IMR-90 (cell line): ENCODE measurements at regions of chr5 and their contacts with region 1.

Region 1: DNA sequence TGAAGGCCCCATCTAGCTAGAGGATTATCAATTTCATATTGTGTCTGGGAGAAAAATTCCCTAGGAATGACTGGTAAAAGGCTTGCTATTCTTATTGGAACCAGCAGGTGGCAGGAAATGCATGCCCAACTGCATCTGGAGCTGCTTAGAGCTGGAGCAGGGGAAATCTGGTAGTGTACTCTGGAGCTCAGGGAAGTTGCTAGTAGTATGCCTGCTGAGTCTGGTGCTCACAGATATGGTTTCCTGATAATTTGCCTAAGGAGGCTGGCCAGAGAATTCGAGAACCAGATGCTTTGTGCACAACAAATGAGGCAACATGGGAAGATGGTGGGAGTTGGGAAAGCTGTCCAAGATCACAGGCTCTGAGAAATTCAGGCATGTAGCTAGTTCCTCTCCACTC is 53.7 kb downstream of the G3BP1 start:
- DNase-seq: peak; percentile 69
- ATAC-seq: peak; percentile 98
- H3K4me3 ChIP-seq: no peak overlapping the region
- H3K27ac ChIP-seq: no peak overlapping the region
- H3K4me1 ChIP-seq: no peaks in the 10 kb centered on the region
- H3K27me3 ChIP-seq: no peaks in the 10 kb centered on the region
- CTCF ChIP-seq: peak; percentile 89
- POLR2A ChIP-seq: no peak
- RAD21 ChIP-seq: peak; percentile 86

Region 2: GRCh38 chr5:151745071-151745705 is 80.3 kb before region 1 on chr5:
- CTCF ChIA-PET with region 1: no interaction called
- POLR2A ChIA-PET with region 1: no interaction called
- dilution Hi-C with region 1: no loop called
- in situ Hi-C with region 1: no loop called
- intact Hi-C with region 1: no loop called
- DNase-seq: peak; percentile 81
- ATAC-seq: peak; percentile 16
- H3K4me3 ChIP-seq: no peak overlapping the region
- H3K27ac ChIP-seq: peak overlapping the region; percentile 55
- H3K4me1 ChIP-seq: peaks cover 17% of the 10 kb centered on the region
- H3K27me3 ChIP-seq: no peaks in the 10 kb centered on the region
- CTCF ChIP-seq: no peak; the same call in 1 of the 2 replicates
- POLR2A ChIP-seq: no peak
- RAD21 ChIP-seq: no peak

Region 3: GRCh38 chr5:152142840-152143469 is 317.5 kb after region 1 on chr5:
- CTCF ChIA-PET with region 1: interaction called, 23 read pairs
- POLR2A ChIA-PET with region 1: interaction called, 3 read pairs
- dilution Hi-C with region 1: no loop called
- in situ Hi-C with region 1: loop called (anchors 5 kb)
- intact Hi-C with region 1: loop called (anchors 1 kb)
- DNase-seq: peak; percentile 50
- ATAC-seq: peak; percentile 94
- H3K4me3 ChIP-seq: no peak overlapping the region
- H3K27ac ChIP-seq: no peak overlapping the region
- H3K4me1 ChIP-seq: no peaks in the 10 kb centered on the region
- H3K27me3 ChIP-seq: no peaks in the 10 kb centered on the region
- CTCF ChIP-seq: peak; percentile 70
- POLR2A ChIP-seq: no peak
- RAD21 ChIP-seq: peak; percentile 67

Region 4: DNA sequence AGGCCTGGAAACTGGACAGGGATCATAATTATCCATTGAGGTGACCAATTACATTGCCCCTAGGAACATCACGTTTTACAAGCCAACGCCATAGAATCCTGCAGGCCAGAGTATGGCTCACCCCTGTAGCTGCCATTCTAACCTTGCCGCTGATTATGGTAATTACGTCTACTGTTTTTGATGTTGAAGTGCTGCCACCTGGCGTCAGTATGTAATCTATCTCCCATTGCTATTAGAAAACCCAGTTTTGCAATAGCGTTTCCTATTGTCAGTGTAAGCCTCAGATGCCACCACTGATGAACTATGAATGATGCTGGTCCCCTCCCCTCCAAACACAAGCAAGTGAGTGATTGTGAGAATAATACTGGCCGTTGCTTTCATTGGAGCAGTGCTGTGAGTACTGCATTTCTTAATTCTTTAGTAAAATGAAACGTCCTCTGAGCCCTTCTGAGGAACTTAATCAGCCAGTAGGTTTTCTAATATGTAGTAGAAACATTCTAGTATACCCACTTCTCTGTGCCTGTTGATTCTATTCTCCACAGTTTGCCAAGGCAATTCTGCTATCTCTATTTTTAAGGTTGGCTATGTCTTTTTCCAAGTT is 680.1 kb after region 1 on chr5:
- CTCF ChIA-PET with region 1: no interaction called
- POLR2A ChIA-PET with region 1: no interaction called
- dilution Hi-C with region 1: no loop called
- in situ Hi-C with region 1: no loop called
- intact Hi-C with region 1: loop called (anchors 2 kb)
- DNase-seq: peak; percentile 27
- ATAC-seq: peak; percentile 49; the same call in 1 of the 2 replicates
- H3K4me3 ChIP-seq: no peak overlapping the region
- H3K27ac ChIP-seq: no peak overlapping the region
- H3K4me1 ChIP-seq: no peaks in the 10 kb centered on the region
- H3K27me3 ChIP-seq: no peaks in the 10 kb centered on the region
- CTCF ChIP-seq: peak; percentile 50
- POLR2A ChIP-seq: no peak
- RAD21 ChIP-seq: peak; percentile 32; the same call in 1 of the 2 replicates

Region 5: DNA sequence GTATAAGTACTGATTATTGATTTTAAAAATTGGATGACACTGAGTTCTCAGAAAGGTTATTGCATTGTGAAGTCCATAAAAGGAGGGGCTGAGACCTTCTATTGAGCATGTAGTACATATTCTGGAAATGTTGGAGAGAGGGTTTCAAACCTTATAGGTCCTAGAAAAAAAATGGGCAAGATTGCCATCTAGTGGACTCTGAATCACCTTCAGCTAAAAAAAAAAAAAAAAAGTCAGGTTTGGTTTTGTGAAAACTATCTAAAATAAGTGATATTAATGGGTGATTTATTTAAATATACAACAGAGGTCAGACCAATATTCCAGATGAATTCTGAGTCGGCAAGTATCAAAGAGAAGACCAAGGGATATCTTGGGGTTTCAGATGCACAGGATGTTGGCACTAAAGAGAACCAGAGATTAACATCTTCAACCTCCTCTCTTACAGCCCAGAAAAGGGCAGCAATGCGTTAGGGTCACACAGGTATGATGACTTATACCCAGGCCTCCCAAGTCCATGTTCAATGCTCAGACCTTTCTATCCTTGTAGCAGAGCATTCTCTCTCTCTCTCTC is 689.5 kb after region 1 on chr5:
- CTCF ChIA-PET with region 1: no interaction called
- POLR2A ChIA-PET with region 1: no interaction called
- dilution Hi-C with region 1: no loop called
- in situ Hi-C with region 1: no loop called
- intact Hi-C with region 1: loop called (anchors 2 kb)
- DNase-seq: peak; percentile 11
- ATAC-seq: no peak
- H3K4me3 ChIP-seq: no peak overlapping the region
- H3K27ac ChIP-seq: no peak overlapping the region
- H3K4me1 ChIP-seq: no peaks in the 10 kb centered on the region
- H3K27me3 ChIP-seq: no peaks in the 10 kb centered on the region
- CTCF ChIP-seq: peak; percentile 44
- POLR2A ChIP-seq: no peak
- RAD21 ChIP-seq: 0 out of 2 replicates have a peak, but pooled peaks have one; percentile 4